ENCODE measurements at regions of chr12 and their contacts with region 1.

Region 1: GRCh38 chr12:1795785-1796514 is 24.4 kb upstream of the LRTM2 start:
- DNase-seq: peak; percentile 84 to 97 (median 91)
- ATAC-seq: peak; percentile 92 to 97 (median 94)
- H3K4me3 ChIP-seq: peak overlapping the region; percentile 70 to 82
- H3K4me3 Mint-ChIP-seq: peak overlapping the region; percentile 81 to 90 (median 86)
- H3K27ac ChIP-seq: peak overlapping the region; percentile 71
- H3K27ac Mint-ChIP-seq: peak overlapping the region; percentile 89 to 92
- H3K4me1 ChIP-seq: peaks cover 3 to 34% of the 10 kb centered on the region in 2 experiments
- H3K4me1 Mint-ChIP-seq: peaks cover 12 to 17% (median 16%) of the 10 kb centered on the region in 3 donors
- H3K27me3 ChIP-seq: no peaks in the 10 kb centered on the region
- H3K27me3 Mint-ChIP-seq: no peaks in the 10 kb centered on the region

Region 2: DNA sequence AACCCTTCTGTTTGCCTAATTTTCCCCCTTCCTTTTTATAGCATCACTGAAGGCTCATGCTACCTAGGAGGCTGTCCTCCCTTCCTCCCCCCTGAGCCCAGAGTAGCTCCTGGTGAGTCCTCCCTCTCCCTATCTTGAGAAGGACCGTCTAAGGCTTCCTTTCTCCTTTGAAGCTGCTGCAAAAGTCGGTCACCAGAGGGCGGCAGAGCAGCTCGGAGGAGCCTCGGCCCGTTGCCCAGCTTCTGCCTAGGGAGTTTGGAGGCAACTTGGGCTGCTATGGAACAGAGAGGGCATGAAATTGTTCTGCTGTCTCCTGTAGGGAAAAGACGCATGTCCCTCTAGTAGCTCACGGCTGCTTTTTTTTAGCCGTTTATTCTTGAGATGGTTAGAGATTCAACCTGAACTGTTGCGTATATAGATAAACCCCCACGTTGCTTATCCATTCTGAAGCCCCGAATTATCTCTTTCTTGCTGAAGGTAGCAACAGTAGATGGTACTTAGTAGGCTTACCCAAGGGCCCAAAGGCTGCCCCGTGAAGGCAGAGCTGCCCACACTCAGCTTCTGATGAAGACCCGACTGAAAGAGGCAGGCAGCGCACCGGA is 161.3 kb before region 1 on chr12:
- CTCF ChIA-PET with region 1: interaction called, 9 to 34 read pairs
- POLR2A ChIA-PET with region 1: no interaction called
- DNase-seq: peak; percentile 16 to 72 (median 48)
- ATAC-seq: peak; percentile 53 to 76 (median 56)
- H3K4me3 ChIP-seq: no peak overlapping the region
- H3K4me3 Mint-ChIP-seq: no peak overlapping the region
- H3K27ac ChIP-seq: no peak overlapping the region
- H3K27ac Mint-ChIP-seq: peak overlapping the region in 1 of 2 donors; percentile 69
- H3K4me1 ChIP-seq: peaks cover 2 to 15% of the 10 kb centered on the region in 2 experiments
- H3K4me1 Mint-ChIP-seq: peaks cover 7 to 17% (median 9%) of the 10 kb centered on the region in 3 donors
- H3K27me3 ChIP-seq: peaks cover 3 to 51% of the 10 kb centered on the region in 2 experiments
- H3K27me3 Mint-ChIP-seq: peaks cover 41 to 42% of the 10 kb centered on the region in 2 donors

Region 3: DNA sequence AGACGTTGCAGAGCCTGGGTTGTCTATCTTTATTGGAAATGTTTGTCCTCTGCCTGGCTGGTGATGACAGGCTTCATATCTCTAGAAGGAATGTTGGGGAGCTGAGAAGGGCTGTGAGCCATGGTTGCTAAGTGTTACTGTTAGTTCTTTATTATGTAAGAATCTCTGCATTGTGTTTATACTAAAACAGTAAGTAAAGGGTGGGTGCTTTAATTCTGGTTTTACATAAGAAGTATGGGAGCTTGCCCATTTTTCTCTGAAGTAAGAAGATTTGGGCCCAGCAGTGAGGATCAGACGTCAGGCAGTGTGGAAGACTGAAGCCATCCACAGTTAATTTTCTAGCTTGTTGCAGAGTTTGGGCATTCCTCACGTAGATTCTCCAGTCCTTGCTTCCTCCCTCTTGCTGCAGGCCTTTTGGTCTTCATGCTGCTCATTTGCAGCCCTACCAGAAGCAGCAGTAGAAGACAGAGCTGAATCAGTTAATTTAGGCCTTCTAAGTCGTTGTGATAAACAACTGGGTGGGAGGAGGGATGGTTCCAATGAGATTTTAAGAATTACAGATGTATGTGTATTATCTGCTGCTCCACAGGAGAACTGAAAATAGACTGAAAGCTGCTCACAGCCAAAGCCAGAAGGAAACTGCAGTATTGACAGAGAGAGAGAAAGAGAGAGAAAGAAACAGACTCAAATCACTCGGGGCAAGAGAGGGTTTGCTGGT is 145.5 kb before region 1 on chr12:
- CTCF ChIA-PET with region 1: interaction called, 103 to 167 read pairs
- POLR2A ChIA-PET with region 1: interaction called in 1 of 2 experiments, 4 read pairs
- DNase-seq: no peak
- ATAC-seq: no peak
- H3K4me3 ChIP-seq: no peak overlapping the region
- H3K4me3 Mint-ChIP-seq: no peak overlapping the region
- H3K27ac ChIP-seq: no peak overlapping the region
- H3K27ac Mint-ChIP-seq: no peak overlapping the region
- H3K4me1 ChIP-seq: peaks cover 0 to 9% of the 10 kb centered on the region in 2 experiments
- H3K4me1 Mint-ChIP-seq: peaks cover 0 to 8% (median 7%) of the 10 kb centered on the region in 3 donors
- H3K27me3 ChIP-seq: peaks cover 0 to 21% of the 10 kb centered on the region in 2 experiments
- H3K27me3 Mint-ChIP-seq: peaks cover 4 to 19% of the 10 kb centered on the region in 2 donors

Region 4: GRCh38 chr12:1661553-1662335 is 134.2 kb before region 1 on chr12:
- CTCF ChIA-PET with region 1: interaction called, 4 to 22 read pairs
- POLR2A ChIA-PET with region 1: no interaction called
- DNase-seq: peak; percentile 47 to 92 (median 78)
- ATAC-seq: peak; percentile 80 to 86 (median 83)
- H3K4me3 ChIP-seq: peak overlapping the region; percentile 47 to 59
- H3K4me3 Mint-ChIP-seq: peak overlapping the region; percentile 75 to 78 (median 77)
- H3K27ac ChIP-seq: peak overlapping the region; percentile 41
- H3K27ac Mint-ChIP-seq: peak overlapping the region; percentile 87 to 90
- H3K4me1 ChIP-seq: peaks cover 12 to 26% of the 10 kb centered on the region in 2 experiments
- H3K4me1 Mint-ChIP-seq: peaks cover 31 to 40% (median 38%) of the 10 kb centered on the region in 3 donors
- H3K27me3 ChIP-seq: no peaks in the 10 kb centered on the region
- H3K27me3 Mint-ChIP-seq: no peaks in the 10 kb centered on the region

Region 5: GRCh38 chr12:1939801-1940607 is 144.1 kb after region 1 on chr12:
- CTCF ChIA-PET with region 1: interaction called, 21 to 61 read pairs
- POLR2A ChIA-PET with region 1: no interaction called
- DNase-seq: peak; percentile 70 to 93 (median 88)
- ATAC-seq: peak; percentile 86 to 100 (median 97)
- H3K4me3 ChIP-seq: no peak overlapping the region
- H3K4me3 Mint-ChIP-seq: no peak overlapping the region
- H3K27ac ChIP-seq: no peak overlapping the region
- H3K27ac Mint-ChIP-seq: peak overlapping the region in 1 of 2 donors; percentile 29
- H3K4me1 ChIP-seq: peaks cover 0 to 4% of the 10 kb centered on the region in 2 experiments
- H3K4me1 Mint-ChIP-seq: peaks cover 4 to 5% (median 5%) of the 10 kb centered on the region in 3 donors
- H3K27me3 ChIP-seq: no peaks in the 10 kb centered on the region
- H3K27me3 Mint-ChIP-seq: no peaks in the 10 kb centered on the region

Region 6: GRCh38 chr12:2324387-2324786 is 528.4 kb after region 1 on chr12:
- CTCF ChIA-PET with region 1: no interaction called
- POLR2A ChIA-PET with region 1: no interaction called
- DNase-seq: no peak
- ATAC-seq: no peak
- H3K4me3 ChIP-seq: no peak overlapping the region
- H3K4me3 Mint-ChIP-seq: no peak overlapping the region
- H3K27ac ChIP-seq: no peak overlapping the region
- H3K27ac Mint-ChIP-seq: no peak overlapping the region
- H3K4me1 ChIP-seq: no peaks in the 10 kb centered on the region
- H3K4me1 Mint-ChIP-seq: no peaks in the 10 kb centered on the region
- H3K27me3 ChIP-seq: peaks cover 0 to 35% of the 10 kb centered on the region in 2 experiments
- H3K27me3 Mint-ChIP-seq: peaks cover 23 to 26% of the 10 kb centered on the region in 2 donors